PC-9 (cell line): ENCODE measurements at regions of chr5 and their contacts with region 1.

Region 1: DNA sequence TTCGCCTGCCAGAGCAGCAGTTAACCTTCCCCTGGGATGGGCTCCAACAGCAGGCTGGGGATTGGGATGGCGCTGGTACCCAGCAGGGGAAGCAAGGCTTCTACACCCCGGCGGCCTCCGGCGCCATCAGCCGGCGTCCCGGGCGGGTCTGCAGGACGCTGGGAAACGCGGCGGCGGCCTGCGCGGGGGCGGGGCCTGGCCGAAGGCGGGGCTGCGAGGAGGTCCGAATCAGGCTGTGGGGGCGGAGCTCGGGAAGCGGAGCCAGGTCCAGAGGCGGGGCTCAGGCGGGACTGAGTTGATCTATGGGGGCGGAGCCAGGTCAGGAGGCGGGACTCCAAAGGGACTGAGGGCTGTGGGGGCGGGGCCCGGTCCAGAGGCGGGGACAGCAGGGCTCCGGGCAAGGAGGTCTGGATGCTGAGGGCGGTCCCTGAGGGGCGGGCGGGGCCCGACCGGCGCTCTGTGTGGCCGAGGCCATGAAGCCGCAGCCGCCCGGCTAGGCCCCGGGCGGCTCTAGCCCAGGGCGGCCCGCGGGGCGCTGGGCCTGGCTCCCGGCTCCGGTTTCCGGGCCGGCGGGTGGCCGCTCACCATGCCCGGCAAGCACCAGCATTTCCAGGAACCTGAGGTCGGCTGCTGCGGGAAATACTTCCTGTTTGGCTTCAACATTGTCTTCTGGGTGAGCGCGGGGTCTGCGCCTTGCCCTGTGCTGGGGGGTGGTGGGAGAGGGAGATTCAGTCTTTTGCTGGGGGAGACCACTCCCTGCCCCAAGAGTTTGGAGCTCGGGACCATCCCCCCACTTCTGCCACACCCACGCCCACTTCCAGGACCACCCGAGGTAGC is at the start of gene TSPAN17:
- DNase-seq: peak; percentile 91 to 100
- H3K4me3 ChIP-seq: peak within 1 kb of the TSS; percentile 90
- H3K27ac ChIP-seq: no peak within 1 kb of the TSS
- H3K4me1 ChIP-seq: peaks cover 11% of the 10 kb centered on the region
- H3K27me3 ChIP-seq: no peaks in the 10 kb centered on the region
- CTCF ChIP-seq: no peak; the same call in 1 of the 2 replicates
- total RNA-seq, gene TSPAN17: 81.1 and 82.1 TPM in 2 replicates

Region 2: DNA sequence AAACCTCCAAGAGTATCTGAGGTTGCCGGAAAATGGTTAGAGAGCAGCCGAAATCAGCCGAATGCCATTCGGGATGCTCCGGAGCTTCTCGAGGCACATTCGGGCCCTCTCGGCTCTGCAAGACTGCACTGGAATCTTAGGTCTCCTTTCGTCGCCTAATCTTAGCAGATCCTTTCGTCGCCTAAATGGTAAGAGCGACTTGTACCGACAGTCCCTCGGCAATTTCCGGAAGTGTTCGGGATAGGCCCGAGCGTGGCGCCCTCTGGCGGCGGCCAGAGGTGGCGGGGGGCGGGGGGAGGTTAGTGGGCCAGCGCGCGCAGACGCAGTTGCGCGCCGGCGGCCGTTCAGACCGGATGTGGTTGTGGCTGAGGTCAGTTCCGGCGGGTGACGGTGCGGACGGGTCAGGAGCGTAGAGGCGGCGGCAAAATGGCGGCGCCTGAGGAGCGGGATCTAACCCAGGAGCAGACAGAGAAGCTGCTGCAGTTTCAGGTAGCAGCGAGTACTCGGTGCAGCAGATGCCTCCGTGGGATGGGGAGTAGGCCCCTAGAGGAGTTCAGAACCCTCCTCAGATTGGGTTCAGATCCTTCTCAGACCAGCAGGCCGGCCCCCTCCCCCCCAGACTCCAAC is 199.2 kb before region 1 on chr5 and contains the start of gene FAF2:
- CTCF ChIA-PET with region 1: no interaction called
- POLR2A ChIA-PET with region 1: no interaction called
- intact Hi-C with region 1: loop called (anchors 2 kb)
- DNase-seq: peak; percentile 97 to 100
- H3K4me3 ChIP-seq: peak within 1 kb of the TSS; percentile 89
- H3K27ac ChIP-seq: peak within 1 kb of the TSS; percentile 89
- H3K4me1 ChIP-seq: peaks cover 34% of the 10 kb centered on the region
- H3K27me3 ChIP-seq: no peaks in the 10 kb centered on the region
- CTCF ChIP-seq: peak; percentile 97
- total RNA-seq, gene FAF2: 41.2 and 59.7 TPM in 2 replicates

Region 3: DNA sequence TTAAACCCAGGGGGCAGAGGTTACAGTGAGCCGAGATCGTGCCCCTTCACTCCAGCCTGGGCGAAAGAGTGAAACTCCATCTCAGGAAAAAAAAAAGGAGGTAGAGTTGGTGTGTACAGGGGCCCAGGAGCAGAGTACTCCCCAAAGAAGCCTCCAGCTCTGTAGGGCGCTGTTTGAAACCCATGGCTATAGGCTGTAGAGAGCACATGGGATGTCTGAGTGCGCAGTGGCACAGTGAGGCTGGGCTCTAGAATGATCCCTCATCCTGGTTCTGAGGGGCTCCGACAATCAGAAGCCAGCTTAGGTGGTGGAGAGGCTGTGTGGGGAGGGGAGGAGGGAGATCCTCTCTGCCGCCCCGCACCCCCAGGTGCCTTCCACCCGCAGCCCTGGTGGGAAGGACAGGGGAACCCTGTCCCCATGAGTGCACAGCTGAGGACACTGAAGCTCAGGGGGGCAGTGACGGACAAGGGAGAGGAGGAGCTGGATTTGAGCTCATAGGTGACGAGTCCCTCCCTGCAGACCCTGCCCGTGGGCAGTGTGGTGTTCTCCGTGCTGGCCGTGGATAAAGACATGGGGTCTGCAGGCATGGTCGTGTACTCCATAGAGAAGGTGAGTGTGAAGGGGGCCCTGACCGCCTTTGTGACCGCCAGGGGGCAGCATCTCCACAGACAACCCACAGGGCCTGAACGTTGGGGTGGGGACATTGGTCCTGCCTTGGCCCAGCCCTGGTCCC is 73.5 kb before region 1 on chr5:
- CTCF ChIA-PET with region 1: no interaction called
- POLR2A ChIA-PET with region 1: no interaction called
- intact Hi-C with region 1: loop called (anchors 1 kb)
- DNase-seq: peak in 1 of 2 experiments; percentile 62
- H3K4me3 ChIP-seq: no peak overlapping the region
- H3K27ac ChIP-seq: no peak overlapping the region
- H3K4me1 ChIP-seq: 0 out of 2 replicates have a peak, but pooled peaks cover 4% of the 10 kb centered on the region
- H3K27me3 ChIP-seq: no peaks in the 10 kb centered on the region
- CTCF ChIP-seq: peak; percentile 90

Region 4: GRCh38 chr5:177086924-177087706 is 439.9 kb after region 1 on chr5:
- CTCF ChIA-PET with region 1: no interaction called
- POLR2A ChIA-PET with region 1: no interaction called
- intact Hi-C with region 1: loop called (anchors 2 kb)
- DNase-seq: peak in 1 of 2 experiments; percentile 77
- H3K4me3 ChIP-seq: peak overlapping the region; percentile 65
- H3K27ac ChIP-seq: no peak overlapping the region
- H3K4me1 ChIP-seq: no peaks in the 10 kb centered on the region
- H3K27me3 ChIP-seq: 0 out of 2 replicates have a peak, but pooled peaks cover 5% of the 10 kb centered on the region
- CTCF ChIP-seq: peak; percentile 62

Region 5: GRCh38 chr5:177509381-177509951 is 862.2 kb after region 1 on chr5 and contains the start of gene DOK3:
- CTCF ChIA-PET with region 1: no interaction called
- POLR2A ChIA-PET with region 1: no interaction called
- intact Hi-C with region 1: no loop called
- DNase-seq: no peak
- H3K4me3 ChIP-seq: no peak within 1 kb of the TSS
- H3K27ac ChIP-seq: no peak within 1 kb of the TSS
- H3K4me1 ChIP-seq: no peaks in the 10 kb centered on the region
- H3K27me3 ChIP-seq: no peaks in the 10 kb centered on the region
- CTCF ChIP-seq: no peak
- total RNA-seq, gene DOK3: 12.2 and 12.3 TPM in 2 replicates